Activated B cell treated with CpG ODN at 0.5 μM for 24 hours (primary cell): ENCODE measurements at regions of chr16 and their contacts with region 1.

Region 1: GRCh38 chr16:75647492-75648264 is at the starts of genes KARS1 and TERF2IP:
- DNase-seq: peak; percentile 92
- ATAC-seq: peak; percentile 86
- H3K4me3 Mint-ChIP-seq: peak within 1 kb of the TSS; percentile 100
- H3K27ac Mint-ChIP-seq: peak within 1 kb of the TSS; percentile 98
- H3K4me1 Mint-ChIP-seq: peaks cover 65% of the 10 kb centered on the region
- H3K27me3 Mint-ChIP-seq: no peaks in the 10 kb centered on the region
- CTCF ChIP-seq: no peak
- total RNA-seq, gene KARS1: 166 and 182 TPM in 2 replicates
- total RNA-seq, gene TERF2IP: 52.6 and 52.7 TPM in 2 replicates

Region 2: GRCh38 chr16:74984535-74985296 is 663.0 kb before region 1 on chr16 and contains the start of gene WDR59:
- CTCF ChIA-PET with region 1: no interaction called
- POLR2A ChIA-PET with region 1: no interaction called
- intact Hi-C with region 1: loop called (anchors 2 kb)
- DNase-seq: peak; percentile 90
- ATAC-seq: peak; percentile 99
- H3K4me3 Mint-ChIP-seq: peak within 1 kb of the TSS; percentile 96
- H3K27ac Mint-ChIP-seq: peak within 1 kb of the TSS; percentile 88
- H3K4me1 Mint-ChIP-seq: peaks cover 20% of the 10 kb centered on the region
- H3K27me3 Mint-ChIP-seq: no peaks in the 10 kb centered on the region
- CTCF ChIP-seq: no peak
- total RNA-seq, gene WDR59: 80.8 and 93.3 TPM in 2 replicates

Region 3: GRCh38 chr16:75198135-75198600 is 449.5 kb before region 1 on chr16:
- CTCF ChIA-PET with region 1: interaction called, 6 read pairs
- POLR2A ChIA-PET with region 1: interaction called, 4 read pairs
- intact Hi-C with region 1: loop called (anchors 2 kb)
- DNase-seq: no peak
- ATAC-seq: no peak
- H3K4me3 Mint-ChIP-seq: no peak overlapping the region
- H3K27ac Mint-ChIP-seq: no peak overlapping the region
- H3K4me1 Mint-ChIP-seq: peaks cover 14% of the 10 kb centered on the region
- H3K27me3 Mint-ChIP-seq: peaks cover 39% of the 10 kb centered on the region
- CTCF ChIP-seq: no peak

Region 4: GRCh38 chr16:75464130-75464918 is 183.4 kb before region 1 on chr16 and contains the start of gene TMEM170A:
- CTCF ChIA-PET with region 1: interaction called, 4 read pairs
- POLR2A ChIA-PET with region 1: interaction called, 3 read pairs
- intact Hi-C with region 1: loop called (anchors 1 kb)
- DNase-seq: peak; percentile 98
- ATAC-seq: peak; percentile 95
- H3K4me3 Mint-ChIP-seq: peak within 1 kb of the TSS; percentile 92
- H3K27ac Mint-ChIP-seq: peak within 1 kb of the TSS; percentile 89
- H3K4me1 Mint-ChIP-seq: peaks cover 41% of the 10 kb centered on the region
- H3K27me3 Mint-ChIP-seq: no peaks in the 10 kb centered on the region
- CTCF ChIP-seq: peak; percentile 99
- total RNA-seq, gene TMEM170A: 25.3 and 28.3 TPM in 2 replicates

Region 5: GRCh38 chr16:75566040-75566810 is 81.5 kb before region 1 on chr16 and contains the start of gene GABARAPL2:
- CTCF ChIA-PET with region 1: no interaction called
- POLR2A ChIA-PET with region 1: interaction called, 67 read pairs
- intact Hi-C with region 1: loop called (anchors 1 kb)
- DNase-seq: peak; percentile 98
- ATAC-seq: peak; percentile 69
- H3K4me3 Mint-ChIP-seq: peak within 1 kb of the TSS; percentile 100
- H3K27ac Mint-ChIP-seq: peak within 1 kb of the TSS; percentile 98
- H3K4me1 Mint-ChIP-seq: peaks cover 57% of the 10 kb centered on the region
- H3K27me3 Mint-ChIP-seq: no peaks in the 10 kb centered on the region
- CTCF ChIP-seq: no peak
- total RNA-seq, gene GABARAPL2: 62.9 and 69.4 TPM in 2 replicates

Region 6: GRCh38 chr16:75764154-75764768 is 116.6 kb after region 1 on chr16:
- CTCF ChIA-PET with region 1: interaction called, 15 read pairs
- POLR2A ChIA-PET with region 1: interaction called, 31 read pairs
- intact Hi-C with region 1: loop called (anchors 1 kb)
- DNase-seq: no peak
- ATAC-seq: peak; percentile 56
- H3K4me3 Mint-ChIP-seq: no peak overlapping the region
- H3K27ac Mint-ChIP-seq: no peak overlapping the region
- H3K4me1 Mint-ChIP-seq: peaks cover 25% of the 10 kb centered on the region
- H3K27me3 Mint-ChIP-seq: peaks cover 6% of the 10 kb centered on the region
- CTCF ChIP-seq: peak; percentile 37